ENCODE measurements at regions of chr17 and their contacts with region 1.

Region 1: DNA sequence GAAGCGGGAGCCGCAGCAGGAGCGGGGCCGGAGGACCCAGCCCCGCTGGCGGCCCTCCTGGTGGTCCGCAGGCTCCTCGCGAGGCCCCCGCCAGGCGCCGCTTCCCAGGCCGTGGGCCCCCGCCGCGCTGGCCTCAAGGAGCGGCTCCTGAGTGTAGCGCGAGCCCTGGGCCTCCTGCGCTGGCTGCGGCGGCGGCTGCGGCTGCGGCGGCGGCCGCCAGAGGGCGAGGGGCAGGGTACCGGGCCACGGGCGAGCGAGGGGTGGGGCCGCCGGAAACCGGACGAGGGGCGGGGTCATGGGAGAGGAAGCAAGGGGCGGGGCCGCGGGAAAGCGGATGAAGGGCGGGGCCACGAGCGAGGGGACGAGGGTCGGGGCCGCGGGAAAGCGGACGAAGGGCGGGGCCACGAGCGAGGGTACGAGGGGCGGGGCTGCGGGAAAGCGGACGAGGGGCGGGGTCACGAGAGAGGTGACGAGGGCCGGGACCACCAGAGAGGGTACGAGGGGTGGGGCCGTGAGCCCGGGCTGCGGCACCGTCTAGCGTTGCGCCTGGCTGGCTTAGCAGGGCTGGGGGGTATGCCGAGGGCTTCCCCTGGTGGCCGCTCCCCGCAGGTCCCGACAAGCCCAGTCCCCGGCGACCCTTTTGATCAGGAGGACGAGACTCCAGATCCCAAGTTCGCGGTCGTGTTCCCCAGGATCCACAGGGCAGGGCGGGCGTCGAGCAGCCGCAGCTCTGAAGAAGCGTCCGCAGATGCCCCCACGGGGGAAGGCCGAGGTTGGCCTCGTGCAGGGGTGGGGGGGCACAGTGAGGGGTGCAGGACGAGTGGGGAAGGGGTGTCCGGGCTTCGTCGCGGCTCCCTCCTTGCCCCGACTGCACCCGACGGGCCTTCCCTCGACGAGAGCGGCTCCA is 1.7 kb downstream of the MYO15B start:
- DNase-seq: peak; percentile 98
- H3K4me3 Mint-ChIP-seq: peak overlapping the region; percentile 69
- H3K27ac Mint-ChIP-seq: no peak overlapping the region
- H3K4me1 Mint-ChIP-seq: no peaks in the 10 kb centered on the region
- H3K27me3 Mint-ChIP-seq: no peaks in the 10 kb centered on the region

Region 2: DNA sequence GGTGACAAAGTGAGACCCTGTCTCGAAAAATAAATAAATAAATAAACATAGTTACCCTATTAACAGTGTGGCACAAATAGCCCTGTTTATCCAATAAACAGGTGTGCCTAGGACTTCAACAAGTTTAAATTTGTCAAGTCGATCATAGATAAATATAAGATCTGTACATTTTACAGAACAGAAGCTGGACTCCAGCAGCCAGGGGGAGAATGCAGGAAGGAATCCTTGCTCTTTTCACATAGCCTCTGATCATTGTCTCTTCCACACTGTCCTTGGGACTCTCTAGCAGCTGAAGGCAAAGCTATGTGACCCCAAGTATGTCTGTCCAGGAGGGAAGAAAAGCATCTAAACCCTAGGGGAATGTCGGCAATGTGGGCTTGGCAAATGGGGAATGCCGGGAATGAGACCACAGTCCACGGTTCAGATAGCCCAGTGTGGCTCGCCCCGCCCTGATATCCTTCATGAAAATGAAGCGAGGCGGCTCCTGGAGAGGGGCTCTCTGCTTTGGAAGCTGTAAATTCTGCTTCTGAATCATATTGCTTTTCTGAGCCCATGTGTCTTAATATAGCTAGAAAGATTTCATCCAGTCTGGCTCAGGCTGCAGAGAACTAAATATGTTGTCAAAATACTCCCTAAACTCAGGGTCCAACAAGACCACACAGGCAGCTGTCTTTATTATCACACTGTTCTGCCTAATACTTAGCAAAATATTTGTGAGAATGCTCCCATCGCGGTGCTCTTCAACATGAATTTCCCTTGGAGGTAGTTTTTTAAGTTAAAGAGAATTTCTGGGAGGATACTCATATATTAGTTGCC is 158.9 kb before region 1 on chr17:
- CTCF ChIA-PET with region 1: no interaction called
- POLR2A ChIA-PET with region 1: interaction called, 3 read pairs
- intact Hi-C with region 1: loop called (anchors 1 kb)
- DNase-seq: no peak
- H3K4me3 Mint-ChIP-seq: no peak overlapping the region
- H3K27ac Mint-ChIP-seq: no peak overlapping the region
- H3K4me1 Mint-ChIP-seq: peaks cover 18% of the 10 kb centered on the region
- H3K27me3 Mint-ChIP-seq: no peaks in the 10 kb centered on the region

Region 3: GRCh38 chr17:75601057-75602051 is 12.1 kb after region 1 on chr17:
- CTCF ChIA-PET with region 1: interaction called, 20 read pairs
- POLR2A ChIA-PET with region 1: no interaction called
- intact Hi-C with region 1: no loop called
- DNase-seq: peak; percentile 75
- H3K4me3 Mint-ChIP-seq: no peak overlapping the region
- H3K27ac Mint-ChIP-seq: no peak overlapping the region
- H3K4me1 Mint-ChIP-seq: no peaks in the 10 kb centered on the region
- H3K27me3 Mint-ChIP-seq: no peaks in the 10 kb centered on the region